ENCODE measurements at regions of chr3 and their contacts with region 1.

Region 1: DNA sequence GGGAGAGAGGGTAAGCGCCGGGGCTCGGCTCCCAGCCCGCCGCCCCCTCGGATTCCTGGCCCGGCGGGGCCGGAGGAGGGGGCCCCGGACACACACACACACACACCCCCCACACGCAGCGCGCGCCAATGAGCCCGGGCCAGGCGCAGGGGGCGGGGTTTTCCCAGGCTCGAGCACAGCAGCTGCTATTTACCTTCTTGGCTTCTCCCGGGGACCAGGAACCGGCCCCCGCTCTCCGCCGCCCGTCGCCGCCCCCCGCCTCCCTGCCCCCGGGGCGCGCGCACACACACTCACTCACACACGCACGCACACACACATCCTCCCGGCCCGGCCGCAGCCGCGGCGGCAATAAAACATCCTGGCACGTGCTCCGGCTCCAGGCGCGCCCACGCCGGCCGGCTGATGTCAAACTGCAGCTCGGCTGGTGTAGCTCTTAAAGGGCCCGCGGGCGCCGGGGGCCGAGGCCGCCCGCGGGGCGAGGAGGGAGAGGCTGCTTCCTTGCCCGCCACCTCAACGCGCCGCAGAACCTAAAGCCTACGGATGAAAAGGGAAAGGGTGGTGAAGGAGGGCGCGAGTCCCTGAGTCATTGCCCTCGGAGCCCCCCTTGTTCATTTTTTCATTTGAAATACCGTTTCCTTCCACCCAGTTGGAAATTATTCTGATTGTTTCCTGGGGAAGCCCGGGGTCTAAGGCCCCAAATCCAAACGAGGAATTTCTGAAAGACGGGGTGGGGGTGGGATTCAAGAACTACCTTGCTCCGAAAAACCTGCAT is 1.0 kb upstream of the HES1 start:
- DNase-seq: peak; percentile 95 to 97
- ATAC-seq: peak; percentile 86
- H3K4me3 ChIP-seq: peak overlapping the region; percentile 4 to 49
- H3K27ac ChIP-seq: peak overlapping the region; percentile 54 to 82
- H3K4me1 ChIP-seq: peaks cover 0 to 9% of the 10 kb centered on the region in 2 donors
- H3K27me3 ChIP-seq: no peaks in the 10 kb centered on the region

Region 2: DNA sequence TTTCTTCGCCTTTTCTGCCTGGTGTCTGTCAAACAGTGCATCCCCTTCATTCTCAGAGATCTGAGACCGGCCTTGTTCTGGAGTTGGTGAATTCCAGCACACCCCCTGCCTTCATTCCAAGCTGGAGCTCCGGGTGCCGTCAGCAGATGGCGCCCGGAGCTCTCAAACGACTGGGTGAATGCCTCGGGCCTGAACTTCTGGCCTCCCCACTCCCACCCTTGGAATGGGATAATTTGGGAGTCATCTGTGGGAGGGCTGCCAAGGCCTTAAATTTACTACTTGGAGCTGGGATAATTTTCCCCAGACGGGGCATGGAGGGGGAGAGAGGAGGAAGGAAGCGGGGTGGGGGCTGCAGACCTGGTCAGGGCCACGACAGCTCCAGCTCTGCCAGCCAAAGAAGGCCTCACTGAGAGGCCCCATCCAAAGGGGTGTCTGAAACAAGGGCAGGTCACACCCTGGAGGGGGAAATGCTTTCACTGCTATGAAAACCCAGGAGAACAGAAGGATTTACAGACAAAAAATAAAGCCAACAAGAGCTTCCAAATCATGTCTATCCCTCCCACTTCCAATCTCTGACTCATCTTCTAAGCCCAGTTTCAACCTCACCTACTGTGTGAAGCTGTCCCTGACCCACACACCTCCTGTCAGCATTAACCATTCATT is 354.0 kb before region 1 on chr3:
- intact Hi-C with region 1: loop called (anchors 2 kb)
- DNase-seq: peak; percentile 78 to 89
- ATAC-seq: peak; percentile 90
- H3K4me3 ChIP-seq: no peak overlapping the region
- H3K27ac ChIP-seq: no peak overlapping the region
- H3K4me1 ChIP-seq: no peaks in the 10 kb centered on the region
- H3K27me3 ChIP-seq: no peaks in the 10 kb centered on the region

Region 3: DNA sequence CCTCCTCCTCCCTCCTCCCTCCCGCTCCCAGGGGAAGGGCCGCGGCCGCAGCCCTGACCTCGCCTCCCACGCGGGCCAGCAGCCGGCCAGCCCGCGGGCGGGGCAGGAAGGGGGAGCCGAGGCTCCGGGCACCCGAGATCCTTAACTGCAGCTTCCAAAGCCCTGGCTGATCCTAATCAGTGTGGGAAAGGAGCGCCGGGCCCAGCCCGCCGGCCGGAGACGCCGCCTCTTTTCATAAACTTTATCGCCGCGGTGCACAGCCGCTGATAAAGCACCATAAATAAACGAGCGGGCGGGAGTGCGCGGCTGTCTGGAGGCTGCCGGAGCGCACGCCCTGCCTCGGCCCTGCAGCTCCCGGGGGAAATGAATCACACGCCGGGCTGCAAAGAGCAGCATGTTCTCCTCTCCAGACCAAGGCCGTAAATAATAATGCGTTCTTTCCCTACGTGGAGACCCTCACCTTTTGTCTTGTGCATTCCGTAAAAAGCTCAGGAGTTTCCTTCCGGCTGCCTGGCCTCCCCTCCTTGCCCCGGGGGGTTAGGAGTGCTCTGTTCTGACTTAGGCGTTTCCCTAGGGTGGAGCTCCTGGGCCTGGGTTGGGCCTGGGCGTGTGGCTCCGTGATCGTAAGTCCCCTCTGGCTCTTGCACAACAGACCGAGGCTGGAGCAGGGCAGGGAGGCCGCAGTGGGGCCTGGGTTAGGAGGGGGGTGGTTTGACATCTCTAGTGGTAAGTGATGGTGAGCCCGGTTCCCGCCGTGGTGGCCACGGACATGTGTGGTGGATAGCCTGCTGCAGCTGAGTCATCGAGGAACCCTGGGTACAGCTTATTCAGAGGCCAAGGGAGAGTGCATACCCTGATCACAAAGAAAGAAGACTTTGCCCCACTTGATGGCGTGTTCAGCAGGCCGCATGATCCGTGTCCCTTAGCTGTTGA is 131.6 kb before region 1 on chr3:
- intact Hi-C with region 1: loop called (anchors 2 kb)
- DNase-seq: peak; percentile 95 to 96
- ATAC-seq: peak; percentile 94
- H3K4me3 ChIP-seq: peak overlapping the region in 1 of 2 donors; percentile 14
- H3K27ac ChIP-seq: peak overlapping the region in 1 of 2 donors; percentile 69
- H3K4me1 ChIP-seq: peaks cover under 1 to 1% of the 10 kb centered on the region in 2 donors
- H3K27me3 ChIP-seq: no peaks in the 10 kb centered on the region

Region 4: GRCh38 chr3:194269610-194270145 is 134.7 kb after region 1 on chr3:
- intact Hi-C with region 1: loop called in 1 of 2 experiments (anchors 5 kb)
- DNase-seq: peak; percentile 92
- ATAC-seq: peak; percentile 56
- H3K4me3 ChIP-seq: no peak overlapping the region
- H3K27ac ChIP-seq: peak overlapping the region in 1 of 2 donors; percentile 38
- H3K4me1 ChIP-seq: peaks cover 0 to 3% of the 10 kb centered on the region in 2 donors
- H3K27me3 ChIP-seq: no peaks in the 10 kb centered on the region

Region 5: DNA sequence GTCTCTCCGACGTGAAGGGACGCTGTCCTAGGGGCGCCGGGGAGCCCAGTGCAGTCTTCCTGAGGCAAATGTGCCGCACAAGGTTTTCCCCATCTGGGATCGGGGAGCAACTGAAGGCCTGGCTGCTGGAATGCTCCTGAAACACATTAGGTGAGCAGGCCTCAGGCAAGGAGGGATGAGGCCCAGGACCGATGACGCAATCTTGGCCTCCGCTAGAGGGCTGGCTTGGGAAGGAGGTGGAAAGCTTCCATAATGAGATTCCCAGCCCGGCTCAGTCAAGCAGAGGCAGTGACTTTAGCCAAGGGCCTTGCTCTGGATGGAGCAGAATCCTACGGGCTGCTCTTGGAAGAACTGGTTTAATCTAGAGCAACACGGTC is 165.4 kb after region 1 on chr3:
- intact Hi-C with region 1: loop called in 1 of 2 experiments (anchors 5 kb)
- DNase-seq: peak; percentile 86 to 92
- ATAC-seq: peak; percentile 89
- H3K4me3 ChIP-seq: no peak overlapping the region
- H3K27ac ChIP-seq: no peak overlapping the region
- H3K4me1 ChIP-seq: no peaks in the 10 kb centered on the region
- H3K27me3 ChIP-seq: no peaks in the 10 kb centered on the region

Measured in aorta (tissue), 5 donors.